ENCODE measurements at regions of chr20 and their contacts with region 1.

Region 1: DNA sequence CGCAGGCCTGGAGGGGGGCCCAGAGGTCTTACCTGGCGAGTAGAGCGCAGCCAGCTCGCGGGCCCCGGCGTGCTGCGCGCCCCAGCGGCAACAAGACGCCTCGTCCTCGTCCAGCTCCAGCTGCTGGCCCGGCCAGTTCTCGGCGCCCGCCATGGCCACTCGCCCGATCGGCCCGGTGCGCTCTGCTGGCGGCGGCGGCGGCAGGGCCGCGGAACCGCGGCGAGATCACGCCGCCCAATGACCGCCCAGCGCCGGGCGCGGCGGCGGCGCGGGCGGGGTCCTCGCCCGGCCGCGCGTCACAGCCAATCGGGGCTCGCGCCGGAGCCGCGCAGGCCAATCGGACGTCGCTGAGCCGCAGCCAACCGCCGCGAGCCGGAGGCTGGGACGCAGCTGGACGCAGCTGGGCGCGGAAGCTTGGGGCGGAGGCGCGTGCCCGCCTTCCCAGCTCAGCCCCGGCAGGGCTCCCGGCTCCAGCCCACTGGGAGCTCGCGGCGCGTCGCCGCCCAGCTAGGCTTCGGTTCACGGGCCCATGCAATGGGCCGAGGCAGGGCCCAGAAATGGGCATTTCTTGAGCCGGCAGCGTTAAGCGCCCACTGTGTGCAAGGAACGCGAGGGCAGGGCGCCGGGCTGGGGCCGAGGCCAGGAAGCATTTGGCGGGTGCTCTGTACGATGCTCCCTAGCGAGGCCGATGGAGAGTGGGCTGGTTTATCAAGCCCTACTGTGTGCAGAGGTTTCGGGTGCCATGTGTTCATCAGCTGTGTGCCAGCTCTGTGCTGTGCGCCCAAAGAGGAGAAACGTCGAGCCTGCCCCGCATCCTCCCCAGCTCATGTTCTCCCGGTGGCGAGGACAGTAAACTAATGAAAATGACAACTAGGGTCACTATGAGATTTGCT is at the start of gene PEDS1:
- DNase-seq: peak; percentile 45
- ATAC-seq: peak; percentile 98
- H3K4me3 ChIP-seq: peak within 1 kb of the TSS; percentile 98
- H3K27ac ChIP-seq: peak within 1 kb of the TSS; percentile 75
- H3K4me1 ChIP-seq: peaks cover 8% of the 10 kb centered on the region
- H3K27me3 ChIP-seq: no peaks in the 10 kb centered on the region
- CTCF ChIP-seq: no peak
- EP300 ChIP-seq: 0 out of 4 replicates have a peak, but pooled peaks of 1 of the 2 experiments have one; percentile 17
- POLR2A ChIP-seq: peak; percentile 94
- RAD21 ChIP-seq: no peak
- polyA plus RNA-seq, gene PEDS1: 1.7 to 4.3 TPM

Region 2: GRCh38 chr20:50048420-50049166 is 105.1 kb before region 1 on chr20:
- CTCF ChIA-PET with region 1: no interaction called
- POLR2A ChIA-PET with region 1: no interaction called
- RAD21 ChIA-PET with region 1: no interaction called
- SMC1A ChIA-PET with region 1: no interaction called
- in situ Hi-C with region 1: no loop called
- intact Hi-C with region 1: no loop called
- DNase-seq: no peak
- ATAC-seq: peak; percentile 84
- H3K4me3 ChIP-seq: no peak overlapping the region
- H3K27ac ChIP-seq: no peak overlapping the region
- H3K4me1 ChIP-seq: peaks cover 15% of the 10 kb centered on the region
- H3K27me3 ChIP-seq: no peaks in the 10 kb centered on the region
- CTCF ChIP-seq: no peak
- EP300 ChIP-seq: no peak
- POLR2A ChIP-seq: no peak
- RAD21 ChIP-seq: no peak

Region 3: GRCh38 chr20:50115591-50116372 is 37.9 kb before region 1 on chr20:
- CTCF ChIA-PET with region 1: interaction called, 49 read pairs
- POLR2A ChIA-PET with region 1: interaction called, 34 read pairs
- RAD21 ChIA-PET with region 1: interaction called, 13 read pairs
- SMC1A ChIA-PET with region 1: interaction called, 28 read pairs
- in situ Hi-C with region 1: no loop called
- intact Hi-C with region 1: loop called (anchors 5 kb)
- DNase-seq: peak; percentile 89
- ATAC-seq: peak; percentile 80
- H3K4me3 ChIP-seq: peak overlapping the region; percentile 96
- H3K27ac ChIP-seq: peak overlapping the region; percentile 65
- H3K4me1 ChIP-seq: peaks cover 22% of the 10 kb centered on the region
- H3K27me3 ChIP-seq: no peaks in the 10 kb centered on the region
- CTCF ChIP-seq: no peak
- EP300 ChIP-seq: no peak
- POLR2A ChIP-seq: peak; percentile 77
- RAD21 ChIP-seq: no peak

Region 4: DNA sequence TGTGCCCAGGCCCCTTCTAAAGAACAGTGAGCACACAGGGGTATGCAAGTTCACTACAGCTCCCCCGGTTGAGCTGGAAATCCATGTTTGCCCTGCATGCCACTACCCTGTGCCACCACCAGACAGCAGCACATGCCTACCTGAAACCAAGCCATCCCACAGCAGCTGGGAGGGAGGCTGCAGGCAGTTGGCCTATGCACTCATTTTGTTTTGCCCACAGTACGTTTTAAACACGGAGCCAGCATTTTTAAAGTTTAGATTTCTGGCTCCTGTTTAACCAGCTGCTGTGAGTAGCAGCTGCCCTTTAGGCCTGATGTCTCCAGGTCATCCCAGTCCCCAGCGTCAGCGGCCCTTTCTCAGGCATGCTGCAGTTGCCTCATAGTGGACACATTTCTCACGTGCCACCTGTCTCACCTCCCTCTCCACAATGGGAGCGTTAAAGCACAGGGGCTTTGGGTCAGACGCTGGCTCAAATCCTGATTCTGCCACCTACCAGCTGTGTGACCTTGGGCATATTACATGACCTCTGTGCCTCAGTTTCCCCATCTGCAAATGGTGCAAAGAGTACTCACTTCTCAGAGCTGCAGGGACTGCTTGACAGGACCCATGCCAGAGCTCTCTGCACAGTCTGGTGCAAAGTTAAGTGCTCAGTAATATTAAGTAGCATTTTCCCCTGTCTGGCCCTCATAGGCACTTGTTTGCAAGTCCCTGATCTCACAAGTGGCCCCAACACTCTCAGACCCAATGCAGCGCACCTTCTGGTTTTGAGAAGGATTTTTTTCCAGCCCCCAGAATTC is 32.6 kb before region 1 on chr20:
- CTCF ChIA-PET with region 1: interaction called, 49 read pairs
- POLR2A ChIA-PET with region 1: interaction called, 34 read pairs
- RAD21 ChIA-PET with region 1: interaction called, 13 read pairs
- SMC1A ChIA-PET with region 1: interaction called, 28 read pairs
- in situ Hi-C with region 1: no loop called
- intact Hi-C with region 1: no loop called
- DNase-seq: no peak
- ATAC-seq: peak; percentile 88
- H3K4me3 ChIP-seq: no peak overlapping the region
- H3K27ac ChIP-seq: no peak overlapping the region
- H3K4me1 ChIP-seq: peaks cover 4% of the 10 kb centered on the region
- H3K27me3 ChIP-seq: no peaks in the 10 kb centered on the region
- CTCF ChIP-seq: peak; percentile 74 to 89 (median 87)
- EP300 ChIP-seq: no peak
- POLR2A ChIP-seq: peak; percentile 40; the same call in 1 of the 2 replicates
- RAD21 ChIP-seq: peak; percentile 79

Region 5: GRCh38 chr20:50179507-50180016 is 25.8 kb after region 1 on chr20:
- CTCF ChIA-PET with region 1: interaction called, 12 read pairs
- POLR2A ChIA-PET with region 1: no interaction called
- RAD21 ChIA-PET with region 1: no interaction called
- SMC1A ChIA-PET with region 1: no interaction called
- in situ Hi-C with region 1: no loop called
- intact Hi-C with region 1: no loop called
- DNase-seq: no peak
- ATAC-seq: peak; percentile 44
- H3K4me3 ChIP-seq: no peak overlapping the region
- H3K27ac ChIP-seq: no peak overlapping the region
- H3K4me1 ChIP-seq: no peaks in the 10 kb centered on the region
- H3K27me3 ChIP-seq: no peaks in the 10 kb centered on the region
- CTCF ChIP-seq: no peak
- EP300 ChIP-seq: no peak
- POLR2A ChIP-seq: no peak
- RAD21 ChIP-seq: no peak

Region 6: DNA sequence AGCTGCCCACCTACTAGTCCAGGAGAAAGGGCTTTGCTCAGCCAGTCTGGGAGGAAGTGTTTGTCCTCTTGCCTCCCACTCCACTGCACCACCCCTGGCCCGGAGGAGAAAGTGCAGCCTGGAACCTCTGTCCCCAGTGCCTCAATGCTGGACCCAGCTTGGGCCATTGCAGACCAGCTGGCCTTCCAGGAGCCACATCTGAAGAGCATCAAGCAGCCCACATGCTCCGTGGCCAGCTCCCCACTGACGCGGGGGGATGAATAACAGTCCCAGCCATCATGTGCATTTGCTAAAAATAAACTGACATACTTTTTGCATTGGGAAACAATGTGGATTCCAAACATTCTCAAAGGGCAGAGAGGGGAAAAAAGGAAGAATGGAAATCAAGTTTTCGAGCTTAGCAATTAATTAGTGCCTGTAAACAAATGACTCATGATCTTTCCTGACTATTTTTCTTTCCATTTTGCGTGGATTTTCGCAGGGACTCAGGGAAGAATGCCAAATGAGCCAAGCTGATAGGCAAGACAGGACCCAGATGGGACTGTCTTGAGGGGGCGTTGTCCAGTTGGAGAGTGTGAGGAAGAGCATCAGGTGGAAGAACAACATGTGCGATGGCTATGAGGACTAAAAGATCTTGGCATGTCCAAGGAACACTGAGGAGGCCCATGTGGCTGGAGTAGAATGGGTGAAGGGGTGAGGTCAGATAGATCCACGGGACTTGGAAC is 71.0 kb after region 1 on chr20:
- CTCF ChIA-PET with region 1: no interaction called
- POLR2A ChIA-PET with region 1: no interaction called
- RAD21 ChIA-PET with region 1: no interaction called
- SMC1A ChIA-PET with region 1: no interaction called
- in situ Hi-C with region 1: no loop called
- intact Hi-C with region 1: no loop called
- DNase-seq: no peak
- ATAC-seq: no peak
- H3K4me3 ChIP-seq: no peak overlapping the region
- H3K27ac ChIP-seq: no peak overlapping the region
- H3K4me1 ChIP-seq: no peaks in the 10 kb centered on the region
- H3K27me3 ChIP-seq: peaks cover 0 to 1% of the 10 kb centered on the region in 2 experiments; a peak in 2 of 4 replicates
- CTCF ChIP-seq: no peak
- EP300 ChIP-seq: no peak
- POLR2A ChIP-seq: no peak
- RAD21 ChIP-seq: no peak

Region 7: DNA sequence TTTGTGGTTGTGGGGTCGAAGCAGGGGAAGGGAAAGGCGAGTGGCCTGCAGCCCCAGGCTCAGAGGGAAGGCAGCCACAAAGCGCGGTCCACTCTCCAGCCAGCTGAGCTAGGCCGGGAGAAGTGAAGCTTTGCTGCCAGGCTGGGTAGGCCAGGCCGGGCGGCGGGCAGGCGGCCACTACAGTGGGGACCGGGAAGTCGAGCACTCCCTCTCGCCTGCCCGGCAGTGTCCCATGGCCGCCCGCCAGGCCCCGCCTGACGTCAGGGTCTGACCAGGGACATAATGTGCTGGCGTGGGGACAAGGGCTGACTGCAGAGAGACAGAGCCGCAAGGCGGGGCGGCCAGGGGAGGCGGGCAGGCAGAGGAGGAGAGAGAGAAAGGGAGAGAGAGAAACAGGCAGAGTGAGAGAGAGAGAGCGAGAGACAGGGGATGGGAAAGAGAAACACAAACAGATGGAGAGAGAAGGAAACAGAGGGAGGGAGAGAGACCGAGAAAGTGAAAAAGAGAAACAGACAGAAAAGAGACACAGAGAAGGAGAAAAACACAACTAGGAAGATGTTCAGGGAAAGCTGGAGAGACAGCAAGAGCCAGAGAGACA is 261.9 kb after region 1 on chr20:
- CTCF ChIA-PET with region 1: no interaction called
- POLR2A ChIA-PET with region 1: no interaction called
- RAD21 ChIA-PET with region 1: no interaction called
- SMC1A ChIA-PET with region 1: no interaction called
- in situ Hi-C with region 1: no loop called
- intact Hi-C with region 1: no loop called
- DNase-seq: no peak
- ATAC-seq: no peak
- H3K4me3 ChIP-seq: no peak overlapping the region
- H3K27ac ChIP-seq: no peak overlapping the region
- H3K4me1 ChIP-seq: no peaks in the 10 kb centered on the region
- H3K27me3 ChIP-seq: no peaks in the 10 kb centered on the region; a peak in 1 of 4 replicates
- CTCF ChIP-seq: no peak
- EP300 ChIP-seq: no peak
- POLR2A ChIP-seq: no peak
- RAD21 ChIP-seq: no peak